Sciatic nerve (tissue), 2 donors: ENCODE measurements at regions of chr9 and their contacts with region 1.

Region 1: DNA sequence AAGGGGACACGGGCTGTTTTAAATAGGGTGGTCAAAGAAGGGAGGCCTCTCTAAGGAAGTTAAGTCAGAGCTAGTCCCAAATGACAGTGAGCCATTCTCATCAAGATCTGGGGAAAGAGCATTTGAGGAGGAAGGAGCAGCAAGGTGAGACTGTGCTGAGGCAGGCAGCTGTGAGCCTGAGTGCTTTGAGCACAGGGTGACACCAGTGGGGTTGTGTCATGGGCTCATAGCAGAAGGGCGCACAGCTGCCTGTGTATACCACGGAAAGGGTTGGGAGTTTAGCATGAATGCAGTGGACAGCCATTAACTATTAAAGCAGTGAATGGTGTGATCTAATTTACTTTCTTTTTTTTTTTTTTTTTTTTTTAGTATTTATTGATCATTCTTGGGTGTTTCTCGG is 19.2 kb downstream of the DMRT1 start:
- DNase-seq: no peak
- ATAC-seq: no peak

Region 2: DNA sequence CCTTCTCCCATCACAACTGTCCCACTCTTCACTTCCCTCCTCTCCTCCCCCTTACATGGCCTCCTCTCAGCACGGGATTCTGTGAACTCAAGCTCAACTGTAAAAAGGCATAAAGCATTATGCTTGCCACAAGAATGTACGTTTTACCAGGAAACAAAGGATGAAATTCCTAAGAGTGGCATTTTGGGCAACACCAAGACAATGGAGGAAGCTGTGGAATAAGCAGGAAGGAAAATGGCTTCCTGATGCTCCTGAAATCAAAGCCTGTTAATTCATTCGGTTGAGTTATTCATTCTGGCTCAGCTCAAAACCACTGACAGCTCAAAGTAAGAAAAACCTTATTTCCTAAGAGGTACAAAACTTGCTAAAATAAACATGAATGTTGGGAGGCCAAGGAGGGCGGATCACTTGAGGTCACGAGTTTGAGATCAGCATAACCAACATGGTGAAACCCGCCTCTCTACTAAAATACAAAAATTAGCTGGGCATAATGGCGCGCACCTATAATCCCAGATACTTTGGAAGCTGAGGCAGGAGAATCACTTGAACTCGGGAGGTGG is 60.0 kb before region 1 on chr9:
- intact Hi-C with region 1: no loop called
- DNase-seq: no peak
- ATAC-seq: no peak

Region 3: DNA sequence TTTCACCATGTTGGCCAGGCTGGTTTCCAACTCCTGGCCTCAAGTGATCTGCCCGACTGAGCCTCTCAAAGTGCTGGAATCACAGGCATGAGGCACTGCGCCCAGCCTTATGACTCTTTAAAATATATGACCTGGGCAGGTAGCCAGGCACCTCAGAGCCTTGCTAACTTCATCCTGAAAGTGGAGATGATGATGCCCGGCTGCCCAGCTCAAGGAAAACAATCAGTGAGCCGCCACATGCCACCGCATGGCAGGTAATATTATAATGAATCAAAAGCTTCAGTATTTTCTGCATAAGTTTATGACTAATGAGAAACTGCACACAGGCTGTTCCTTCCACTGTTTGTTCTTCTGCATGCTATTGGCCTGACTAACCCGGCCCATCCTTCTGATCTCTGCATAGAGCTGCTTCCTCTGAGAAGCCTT is 49.6 kb before region 1 on chr9:
- intact Hi-C with region 1: loop called (anchors 5 kb)
- DNase-seq: no peak
- ATAC-seq: no peak

Region 4: GRCh38 chr9:1253064-1253979 is 392.6 kb after region 1 on chr9:
- intact Hi-C with region 1: no loop called
- DNase-seq: no peak
- ATAC-seq: no peak